ENCODE measurements at regions of chr12 and their contacts with region 1.

Region 1: GRCh38 chr12:109597795-109598427 is 24.3 kb downstream of the MVK start:
- DNase-seq: peak; percentile 94

Region 2: GRCh38 chr12:109775172-109775881 is 177.4 kb after region 1 on chr12:
- intact Hi-C with region 1: loop called (anchors 1 kb)
- DNase-seq: peak; percentile 87